ENCODE measurements at regions of chr3 and their contacts with region 1.

Region 1: GRCh38 chr3:112043603-112044201 is 9.2 kb downstream of the TMPRSS7 start:
- DNase-seq: peak; percentile 88
- H3K4me3 ChIP-seq: no peak overlapping the region
- H3K27ac ChIP-seq: no peak overlapping the region
- H3K4me1 ChIP-seq: peaks cover 9% of the 10 kb centered on the region
- CTCF ChIP-seq: peak; percentile 98

Region 2: GRCh38 chr3:111717601-111718000 is 326.1 kb before region 1 on chr3:
- CTCF ChIA-PET with region 1: interaction called, 3 read pairs
- POLR2A ChIA-PET with region 1: no interaction called
- intact Hi-C with region 1: loop called (anchors 1 kb)
- DNase-seq: peak; percentile 78
- H3K4me3 ChIP-seq: no peak overlapping the region
- H3K27ac ChIP-seq: no peak overlapping the region
- H3K4me1 ChIP-seq: peaks cover 6% of the 10 kb centered on the region
- CTCF ChIP-seq: peak; percentile 95

Region 3: GRCh38 chr3:111859974-111860859 is 183.5 kb before region 1 on chr3:
- CTCF ChIA-PET with region 1: no interaction called
- POLR2A ChIA-PET with region 1: interaction called, 3 read pairs
- intact Hi-C with region 1: loop called (anchors 1 kb)
- DNase-seq: peak; percentile 85
- H3K4me3 ChIP-seq: peak overlapping the region; percentile 67
- H3K27ac ChIP-seq: no peak overlapping the region
- H3K4me1 ChIP-seq: peaks cover 5% of the 10 kb centered on the region
- CTCF ChIP-seq: peak; percentile 71

Region 4: DNA sequence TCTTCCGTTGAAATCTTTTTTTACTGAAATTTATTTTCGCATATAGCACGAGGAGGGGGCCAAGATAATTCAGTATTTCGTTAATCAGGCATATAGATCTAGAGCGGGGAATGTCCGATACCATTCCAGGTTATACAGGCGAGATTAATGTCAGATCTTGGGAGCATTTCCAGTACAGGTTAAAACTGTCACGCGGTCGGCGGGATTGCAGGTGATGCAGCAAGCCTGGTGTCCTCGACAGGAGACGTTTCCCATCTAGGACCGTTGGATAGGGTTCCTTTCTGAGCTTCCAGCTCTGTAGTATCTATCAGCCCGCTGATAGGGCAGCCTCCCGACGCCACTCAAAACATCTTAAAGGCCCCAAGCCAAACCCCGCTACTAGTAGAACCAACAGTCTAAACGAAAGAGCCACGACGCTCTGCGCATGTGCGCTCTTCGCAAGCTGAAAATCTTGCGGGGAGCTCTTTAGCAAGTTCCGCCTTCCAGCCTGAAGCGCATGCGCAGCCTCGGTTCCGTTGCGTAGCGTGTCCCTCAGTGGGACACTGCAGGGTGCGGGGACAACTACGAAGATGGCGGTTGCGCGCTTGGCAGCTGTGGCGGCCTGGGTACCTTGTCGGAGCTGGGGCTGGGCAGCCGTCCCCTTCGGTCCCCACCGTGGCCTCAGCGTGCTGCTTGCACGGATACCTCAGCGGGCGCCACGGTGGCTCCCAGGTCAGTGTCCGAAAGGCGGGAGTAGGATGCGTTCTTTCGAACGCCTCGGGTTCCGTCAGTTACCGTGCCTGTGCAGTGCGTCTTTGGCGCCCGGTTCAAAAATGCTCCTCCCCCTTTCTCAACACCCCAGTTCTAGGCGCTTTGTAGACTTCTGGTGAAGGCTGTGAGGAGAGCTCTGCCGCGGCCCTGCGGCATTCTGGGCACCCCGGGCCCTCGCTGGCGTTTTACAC is 64.9 kb before region 1 on chr3 and contains the start of gene ABHD10:
- CTCF ChIA-PET with region 1: no interaction called
- POLR2A ChIA-PET with region 1: interaction called, 16 read pairs
- intact Hi-C with region 1: no loop called
- DNase-seq: peak; percentile 98
- H3K4me3 ChIP-seq: peak within 1 kb of the TSS; percentile 87
- H3K27ac ChIP-seq: peak within 1 kb of the TSS; percentile 49
- H3K4me1 ChIP-seq: peaks cover 27% of the 10 kb centered on the region
- CTCF ChIP-seq: no peak
- total RNA-seq, gene ABHD10: 25.8 and 40.8 TPM in 2 replicates

Region 5: GRCh38 chr3:111989061-111989678 is 54.5 kb before region 1 on chr3:
- CTCF ChIA-PET with region 1: interaction called, 3 read pairs
- POLR2A ChIA-PET with region 1: interaction called, 5 read pairs
- intact Hi-C with region 1: loop called (anchors 1 kb)
- DNase-seq: peak; percentile 68
- H3K4me3 ChIP-seq: no peak overlapping the region
- H3K27ac ChIP-seq: no peak overlapping the region
- H3K4me1 ChIP-seq: no peaks in the 10 kb centered on the region
- CTCF ChIP-seq: peak; percentile 92

Region 6: DNA sequence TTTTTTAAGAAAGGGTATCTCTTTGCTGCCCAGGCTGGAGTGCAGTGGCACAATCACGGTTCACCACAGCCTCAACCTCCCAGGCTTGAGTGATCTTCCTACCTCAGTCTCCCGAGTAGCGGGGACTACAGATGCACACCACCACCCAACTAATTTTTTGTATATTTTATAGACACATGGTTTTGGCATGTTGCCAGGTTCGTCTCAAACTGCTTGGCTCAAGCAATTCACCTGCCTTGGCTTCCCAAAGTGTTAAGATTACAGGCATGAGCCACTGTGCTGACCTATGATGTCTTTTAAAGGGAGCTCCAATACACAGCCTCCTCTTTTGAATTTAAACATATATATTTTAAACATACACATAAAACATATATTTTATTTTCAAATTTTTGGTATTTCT is 189.4 kb after region 1 on chr3:
- CTCF ChIA-PET with region 1: no interaction called
- POLR2A ChIA-PET with region 1: no interaction called
- intact Hi-C with region 1: no loop called
- DNase-seq: no peak
- H3K4me3 ChIP-seq: no peak overlapping the region
- H3K27ac ChIP-seq: no peak overlapping the region
- H3K4me1 ChIP-seq: no peaks in the 10 kb centered on the region
- CTCF ChIP-seq: no peak

Measured in OCI-LY7 (cell line).